MCF 10A (cell line): ENCODE measurements at regions of chr12 and their contacts with region 1.

Region 1: GRCh38 chr12:90274407-90274806 is 565.8 kb upstream of the ATP2B1 start:
- DNase-seq: no peak
- H3K4me3 Mint-ChIP-seq: no peak overlapping the region
- H3K27ac Mint-ChIP-seq: no peak overlapping the region
- H3K4me1 Mint-ChIP-seq: no peaks in the 10 kb centered on the region
- H3K27me3 Mint-ChIP-seq: no peaks in the 10 kb centered on the region
- CTCF ChIP-seq: no peak

Region 2: GRCh38 chr12:89742337-89743022 is 531.9 kb before region 1 on chr12:
- CTCF ChIA-PET with region 1: no interaction called
- POLR2A ChIA-PET with region 1: no interaction called
- intact Hi-C with region 1: no loop called
- DNase-seq: no peak
- H3K4me3 Mint-ChIP-seq: no peak overlapping the region
- H3K27ac Mint-ChIP-seq: no peak overlapping the region
- H3K4me1 Mint-ChIP-seq: no peaks in the 10 kb centered on the region
- H3K27me3 Mint-ChIP-seq: no peaks in the 10 kb centered on the region
- CTCF ChIP-seq: no peak

Region 3: GRCh38 chr12:90129366-90130030 is 144.9 kb before region 1 on chr12:
- CTCF ChIA-PET with region 1: no interaction called
- POLR2A ChIA-PET with region 1: no interaction called
- intact Hi-C with region 1: loop called (anchors 5 kb)
- DNase-seq: no peak
- H3K4me3 Mint-ChIP-seq: no peak overlapping the region
- H3K27ac Mint-ChIP-seq: no peak overlapping the region
- H3K4me1 Mint-ChIP-seq: peaks cover 2% of the 10 kb centered on the region
- H3K27me3 Mint-ChIP-seq: no peaks in the 10 kb centered on the region
- CTCF ChIP-seq: no peak

Region 4: GRCh38 chr12:90311561-90311960 is 37.2 kb after region 1 on chr12:
- CTCF ChIA-PET with region 1: no interaction called
- POLR2A ChIA-PET with region 1: no interaction called
- intact Hi-C with region 1: no loop called
- DNase-seq: no peak
- H3K4me3 Mint-ChIP-seq: no peak overlapping the region
- H3K27ac Mint-ChIP-seq: no peak overlapping the region
- H3K4me1 Mint-ChIP-seq: no peaks in the 10 kb centered on the region
- H3K27me3 Mint-ChIP-seq: no peaks in the 10 kb centered on the region
- CTCF ChIP-seq: no peak